H1 (cell line): ENCODE measurements at regions of chr14 and their contacts with region 1.

Region 1: DNA sequence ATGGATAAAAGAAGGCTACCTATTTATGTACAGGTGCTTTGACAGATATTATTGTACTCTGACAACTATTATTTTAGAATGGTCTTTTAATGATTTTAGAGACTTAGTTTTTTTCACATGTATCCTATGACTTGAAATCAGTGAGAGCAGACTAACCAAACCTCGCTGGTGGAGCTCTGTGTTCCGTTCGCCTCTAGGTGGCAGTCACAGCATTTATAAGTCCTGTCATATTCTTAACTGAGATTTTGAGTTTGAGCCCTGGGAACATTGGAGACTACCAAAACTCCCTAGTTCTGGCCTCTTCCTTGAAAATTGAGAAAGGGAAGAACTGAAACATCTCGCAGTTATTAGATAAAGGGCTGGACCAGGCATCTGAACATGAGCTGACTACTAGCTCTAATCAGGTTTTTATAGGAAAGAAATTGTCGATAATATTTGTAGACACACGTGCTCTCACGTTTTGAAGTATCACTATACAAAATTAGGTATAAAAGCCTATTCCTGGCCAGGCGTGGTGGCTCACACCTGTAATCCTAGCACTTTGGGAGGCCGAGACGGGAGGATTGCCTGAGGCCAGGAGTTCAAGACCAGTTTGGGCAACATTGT is 48.3 kb downstream of the TTLL5 start:
- DNase-seq: peak; percentile 44 to 56
- H3K4me3 ChIP-seq: no peak overlapping the region
- H3K27ac ChIP-seq: no peak overlapping the region
- H3K4me1 ChIP-seq: peaks cover 0 to 14% (median 5%) of the 10 kb centered on the region in 4 experiments; a peak in 6 of 7 replicates
- H3K27me3 ChIP-seq: no peaks in the 10 kb centered on the region
- CTCF ChIP-seq: peak; percentile 49 to 77 (median 69)
- EP300 ChIP-seq: no peak
- POLR2A ChIP-seq: no peak
- RAD21 ChIP-seq: peak; percentile 77 to 80

Region 2: DNA sequence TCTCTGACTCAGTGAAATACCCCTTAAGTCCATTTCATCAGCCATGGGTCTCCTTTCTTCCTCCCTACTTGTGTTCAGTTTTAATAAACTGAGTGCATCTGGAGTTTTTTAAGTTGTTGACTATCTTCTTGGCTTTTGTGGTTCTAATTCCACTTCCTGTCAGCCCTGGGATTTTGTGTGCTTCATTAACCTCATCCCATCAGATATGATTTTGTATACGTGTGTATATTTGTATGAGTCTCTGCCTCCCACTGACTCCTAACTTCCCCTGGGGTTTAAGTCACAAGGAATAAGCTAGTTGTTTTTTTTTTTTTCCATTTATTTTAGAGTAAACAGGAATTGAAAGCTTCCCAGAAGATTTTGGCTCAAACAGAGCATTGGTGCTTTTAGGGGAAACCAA is 14.4 kb after region 1 on chr14:
- CTCF ChIA-PET with region 1: interaction called, 12 read pairs
- POLR2A ChIA-PET with region 1: no interaction called
- DNase-seq: no peak
- H3K4me3 ChIP-seq: no peak overlapping the region
- H3K27ac ChIP-seq: no peak overlapping the region
- H3K4me1 ChIP-seq: no peaks in the 10 kb centered on the region
- H3K27me3 ChIP-seq: no peaks in the 10 kb centered on the region
- CTCF ChIP-seq: no peak
- EP300 ChIP-seq: no peak
- POLR2A ChIP-seq: no peak
- RAD21 ChIP-seq: no peak

Region 3: GRCh38 chr14:75748336-75748735 is 39.0 kb after region 1 on chr14:
- CTCF ChIA-PET with region 1: interaction called, 10 read pairs
- POLR2A ChIA-PET with region 1: no interaction called
- DNase-seq: no peak
- H3K4me3 ChIP-seq: no peak overlapping the region
- H3K27ac ChIP-seq: no peak overlapping the region
- H3K4me1 ChIP-seq: no peaks in the 10 kb centered on the region
- H3K27me3 ChIP-seq: no peaks in the 10 kb centered on the region
- CTCF ChIP-seq: no peak
- EP300 ChIP-seq: no peak
- POLR2A ChIP-seq: no peak
- RAD21 ChIP-seq: no peak

Region 4: GRCh38 chr14:75879031-75879430 is 169.7 kb after region 1 on chr14:
- CTCF ChIA-PET with region 1: interaction called, 19 read pairs
- POLR2A ChIA-PET with region 1: no interaction called
- DNase-seq: no peak
- H3K4me3 ChIP-seq: no peak overlapping the region
- H3K27ac ChIP-seq: no peak overlapping the region
- H3K4me1 ChIP-seq: no peaks in the 10 kb centered on the region
- H3K27me3 ChIP-seq: no peaks in the 10 kb centered on the region
- CTCF ChIP-seq: no peak
- EP300 ChIP-seq: no peak
- POLR2A ChIP-seq: no peak
- RAD21 ChIP-seq: no peak

Region 5: DNA sequence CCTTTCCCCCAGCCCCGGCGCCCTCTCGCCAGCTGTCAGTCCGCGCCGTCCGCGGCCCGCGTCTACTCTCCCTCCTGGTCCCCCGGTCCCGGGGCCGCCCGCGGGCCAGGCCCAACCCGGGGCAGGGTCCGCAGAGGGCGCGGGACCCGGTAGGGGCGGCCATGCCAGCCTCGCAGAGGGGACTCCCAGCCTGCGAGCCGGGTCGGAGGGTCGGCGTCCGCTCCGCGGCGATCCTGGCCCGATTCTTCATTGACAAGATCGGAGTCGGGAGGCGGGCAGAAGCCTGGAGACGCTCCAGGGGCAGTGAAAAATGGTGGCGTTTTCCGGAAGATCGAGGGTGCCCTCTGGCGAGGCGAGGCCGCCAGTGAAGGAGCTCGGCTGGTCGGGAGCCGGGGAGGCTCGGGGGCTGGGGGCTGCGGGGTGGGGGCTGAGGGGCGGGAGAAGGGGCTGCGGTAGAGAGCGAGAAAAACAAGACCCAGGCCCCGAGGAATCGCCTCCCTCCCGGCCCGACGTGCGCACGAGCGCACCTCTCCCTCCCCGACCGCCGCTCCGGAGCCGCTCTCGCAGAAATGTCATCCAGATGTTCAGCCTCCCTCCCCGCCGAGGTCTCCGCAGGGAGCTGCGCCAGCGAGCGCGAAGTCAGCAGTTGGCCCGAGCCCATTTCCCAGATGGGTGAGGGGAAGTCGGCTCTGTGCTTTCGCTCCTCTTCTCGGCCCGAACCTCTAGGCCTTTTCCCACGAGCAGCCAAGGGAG is 273.1 kb after region 1 on chr14:
- CTCF ChIA-PET with region 1: interaction called, 105 read pairs
- POLR2A ChIA-PET with region 1: interaction called, 4 read pairs
- DNase-seq: peak in 1 of 2 experiments; percentile 92
- H3K4me3 ChIP-seq: peak overlapping the region; percentile 47 to 89 (median 66)
- H3K27ac ChIP-seq: no peak overlapping the region
- H3K4me1 ChIP-seq: peaks cover 0 to 11% (median 2%) of the 10 kb centered on the region in 4 experiments; a peak in 6 of 7 replicates
- H3K27me3 ChIP-seq: peaks cover 0 to 26% (median 17%) of the 10 kb centered on the region in 4 experiments; a peak in 5 of 7 replicates
- CTCF ChIP-seq: peak; percentile 54 to 67 (median 63)
- EP300 ChIP-seq: no peak
- POLR2A ChIP-seq: no peak
- RAD21 ChIP-seq: peak; percentile 74 to 81